Cardiac septum (tissue), 1 donor: ENCODE measurements at regions of chr1 and their contacts with region 1.

Region 1: GRCh38 chr1:156123356-156124196 is 9.1 kb downstream of the LMNA start:
- DNase-seq: peak; percentile 97

Region 2: GRCh38 chr1:156001682-156002171 is 121.8 kb before region 1 on chr1:
- intact Hi-C with region 1: no loop called
- DNase-seq: peak; percentile 70

Region 3: DNA sequence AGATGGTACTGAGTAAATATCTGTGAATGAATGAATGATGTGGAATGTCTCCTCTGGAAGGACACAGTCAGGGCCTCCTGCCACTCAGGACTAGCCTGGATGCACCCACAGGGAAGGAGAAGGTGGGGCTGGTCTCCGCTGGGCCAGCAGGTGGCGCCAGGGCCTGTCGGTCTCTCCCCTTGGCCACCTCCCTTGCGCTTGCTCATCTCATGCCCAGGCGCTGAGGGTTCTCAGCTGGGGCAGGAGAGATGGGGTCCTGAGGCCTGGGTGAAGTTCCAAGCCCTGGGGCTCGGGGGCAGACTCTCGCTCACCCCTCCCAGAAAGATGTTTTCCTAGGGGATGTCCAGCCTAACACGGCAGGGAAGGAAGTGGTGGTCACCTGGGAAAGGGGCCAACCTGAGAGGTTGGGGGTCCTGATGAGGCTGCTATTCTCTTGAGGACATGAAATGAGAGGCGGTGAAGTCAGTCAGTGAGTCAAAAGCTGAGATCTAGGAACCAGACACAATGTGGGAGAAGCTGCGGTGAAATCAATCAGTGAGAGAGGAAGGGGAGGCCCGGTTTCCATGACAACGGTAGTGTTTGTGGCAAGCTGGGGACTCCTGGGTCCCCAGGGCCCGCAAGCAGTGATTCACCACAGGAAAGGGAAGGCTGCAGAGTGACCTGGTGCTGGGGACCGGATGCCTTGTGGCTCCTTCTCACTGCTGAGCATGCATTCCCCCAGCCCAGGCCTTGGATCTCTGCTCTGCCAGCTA is 26.8 kb before region 1 on chr1:
- intact Hi-C with region 1: no loop called
- DNase-seq: peak; percentile 93

Region 4: GRCh38 chr1:156106624-156107488 is 16.7 kb before region 1 on chr1:
- intact Hi-C with region 1: loop called (anchors 2 kb)
- DNase-seq: no peak

Region 5: GRCh38 chr1:156500797-156501499 is 377.4 kb after region 1 on chr1:
- intact Hi-C with region 1: loop called (anchors 5 kb)
- DNase-seq: peak; percentile 98